Heart right ventricle (tissue), 16 donors: ENCODE measurements at regions of chr3 and their contacts with region 1.

Region 1: GRCh38 chr3:71583566-71584449 is at the start of gene FOXP1:
- DNase-seq: peak; percentile 75 to 84
- ATAC-seq: peak; percentile 65 to 84 (median 72)
- H3K4me3 ChIP-seq: peak within 1 kb of the TSS; percentile 63 to 93 (median 81)
- H3K27ac ChIP-seq: peak within 1 kb of the TSS; percentile 95 to 99 (median 98)
- H3K4me1 ChIP-seq: peaks cover 0 to 48% (median 36%) of the 10 kb centered on the region in 9 donors
- H3K27me3 ChIP-seq: no peaks in the 10 kb centered on the region
- CTCF ChIP-seq: no peak
- total RNA-seq, gene FOXP1: 36.1 to 56.0 (median 46.1) TPM

Region 2: DNA sequence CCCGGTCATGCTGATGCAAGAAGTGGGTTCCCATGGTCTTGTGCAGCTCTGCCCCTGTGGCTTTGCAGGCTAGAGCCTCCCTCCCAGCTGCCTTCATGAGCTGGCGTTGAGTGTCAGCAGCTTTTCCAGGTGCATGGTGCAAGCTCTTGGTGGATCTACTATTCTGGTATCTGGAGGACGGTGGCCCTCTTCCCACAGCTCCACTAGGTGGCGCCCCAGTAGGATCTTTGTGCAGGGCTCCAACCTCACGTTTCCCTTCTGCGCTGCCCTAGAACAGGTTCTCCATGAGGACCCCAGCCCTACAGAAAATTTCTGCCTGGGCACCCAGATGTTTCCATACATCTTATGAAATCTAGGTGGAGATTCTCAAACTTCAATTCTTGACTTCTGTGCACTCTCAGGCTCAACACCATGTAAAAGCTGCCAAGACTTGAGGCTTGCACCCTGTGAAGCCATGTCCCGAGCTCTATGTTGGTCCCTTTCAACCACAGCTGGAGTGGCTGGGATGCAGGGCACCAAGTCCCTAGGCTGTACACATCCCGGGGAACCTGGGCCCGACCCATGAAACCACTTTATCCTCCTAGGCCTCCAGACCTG is 1033.0 kb before region 1 on chr3:
- intact Hi-C with region 1: loop called in 8 of 10 experiments (anchors 2 to 10 kb)
- DNase-seq: peak; percentile 65 to 72
- ATAC-seq: peak; percentile 76 to 92 (median 82)
- H3K4me3 ChIP-seq: no peak overlapping the region
- H3K27ac ChIP-seq: no peak overlapping the region
- H3K4me1 ChIP-seq: no peaks in the 10 kb centered on the region
- H3K27me3 ChIP-seq: no peaks in the 10 kb centered on the region
- CTCF ChIP-seq: peak; percentile 67 to 86 (median 81)

Region 3: DNA sequence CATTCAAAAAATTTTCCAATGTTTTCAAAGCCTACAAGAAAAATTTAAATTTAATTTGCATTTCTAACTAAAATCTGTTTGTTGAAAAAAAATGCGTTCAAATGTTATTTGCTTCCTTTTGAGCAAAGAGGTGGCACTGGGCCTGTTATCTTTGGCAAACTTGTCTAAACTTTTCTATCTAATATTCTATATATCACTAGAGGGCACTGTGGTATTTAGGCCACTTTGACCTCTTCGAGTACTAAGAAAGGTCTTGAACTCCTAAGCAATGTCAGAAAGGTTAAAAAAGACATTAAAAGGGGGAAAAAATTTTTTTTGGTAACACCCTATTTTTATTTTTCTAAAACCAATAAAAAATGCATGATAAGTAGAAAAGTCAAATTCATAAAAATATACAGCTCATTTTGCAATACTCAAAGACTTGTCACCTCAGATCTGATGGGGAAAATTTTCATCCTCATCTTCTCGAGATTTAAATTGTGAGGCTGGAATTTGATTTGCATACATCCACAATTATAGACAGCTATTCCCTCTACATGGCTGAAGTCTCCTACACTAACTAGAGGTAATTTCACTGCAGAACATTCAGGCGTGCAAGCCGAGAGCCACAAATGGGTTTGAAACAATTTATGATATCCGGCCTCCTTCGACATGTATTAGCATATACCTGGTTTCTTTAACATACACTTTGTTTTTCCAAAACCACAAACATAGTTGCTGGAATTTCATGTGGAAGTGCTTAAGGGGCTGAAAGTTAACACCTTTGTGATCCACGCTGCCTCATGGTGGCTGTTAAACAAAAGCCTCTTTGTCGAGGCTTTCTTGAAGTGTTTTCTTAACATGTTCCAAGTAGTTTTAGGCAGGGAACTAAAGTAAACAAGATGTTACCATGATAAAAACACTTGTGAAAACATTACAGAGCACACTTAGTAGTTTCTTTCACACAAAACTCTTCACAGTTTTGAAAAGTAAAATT is 576.7 kb before region 1 on chr3:
- intact Hi-C with region 1: loop called in 7 of 10 experiments (anchors 5 to 10 kb)
- DNase-seq: no peak
- ATAC-seq: peak in 7 of 8 donors; percentile 48 to 82 (median 66)
- H3K4me3 ChIP-seq: no peak overlapping the region
- H3K27ac ChIP-seq: peak overlapping the region in 8 of 10 donors; percentile 16 to 59 (median 40)
- H3K4me1 ChIP-seq: peaks cover 3 to 86% (median 55%) of the 10 kb centered on the region in 9 donors
- H3K27me3 ChIP-seq: no peaks in the 10 kb centered on the region
- CTCF ChIP-seq: peak; percentile 10 to 76 (median 58)

Region 4: GRCh38 chr3:71069797-71070196 is 514.0 kb before region 1 on chr3:
- intact Hi-C with region 1: loop called in 7 of 10 experiments (anchors 5 to 10 kb)
- DNase-seq: peak; percentile 56 to 75
- ATAC-seq: peak; percentile 45 to 70 (median 58)
- H3K4me3 ChIP-seq: no peak overlapping the region
- H3K27ac ChIP-seq: peak overlapping the region in 4 of 10 donors; percentile 15 to 50 (median 20)
- H3K4me1 ChIP-seq: peaks cover 5 to 64% (median 51%) of the 10 kb centered on the region in 9 donors
- H3K27me3 ChIP-seq: no peaks in the 10 kb centered on the region
- CTCF ChIP-seq: peak; percentile 29 to 74 (median 62)

Region 5: GRCh38 chr3:71247221-71247976 is 336.4 kb before region 1 on chr3:
- intact Hi-C with region 1: loop called in 4 of 10 experiments (anchors 2 to 10 kb)
- DNase-seq: peak in 1 of 2 donors; percentile 24
- ATAC-seq: peak in 6 of 8 donors; percentile 24 to 66 (median 46)
- H3K4me3 ChIP-seq: no peak overlapping the region
- H3K27ac ChIP-seq: peak overlapping the region in 4 of 10 donors; percentile 40 to 82 (median 67)
- H3K4me1 ChIP-seq: peaks cover 8 to 76% (median 48%) of the 10 kb centered on the region in 9 donors
- H3K27me3 ChIP-seq: no peaks in the 10 kb centered on the region
- CTCF ChIP-seq: peak in 2 of 9 donors; percentile 14 to 15

Region 6: DNA sequence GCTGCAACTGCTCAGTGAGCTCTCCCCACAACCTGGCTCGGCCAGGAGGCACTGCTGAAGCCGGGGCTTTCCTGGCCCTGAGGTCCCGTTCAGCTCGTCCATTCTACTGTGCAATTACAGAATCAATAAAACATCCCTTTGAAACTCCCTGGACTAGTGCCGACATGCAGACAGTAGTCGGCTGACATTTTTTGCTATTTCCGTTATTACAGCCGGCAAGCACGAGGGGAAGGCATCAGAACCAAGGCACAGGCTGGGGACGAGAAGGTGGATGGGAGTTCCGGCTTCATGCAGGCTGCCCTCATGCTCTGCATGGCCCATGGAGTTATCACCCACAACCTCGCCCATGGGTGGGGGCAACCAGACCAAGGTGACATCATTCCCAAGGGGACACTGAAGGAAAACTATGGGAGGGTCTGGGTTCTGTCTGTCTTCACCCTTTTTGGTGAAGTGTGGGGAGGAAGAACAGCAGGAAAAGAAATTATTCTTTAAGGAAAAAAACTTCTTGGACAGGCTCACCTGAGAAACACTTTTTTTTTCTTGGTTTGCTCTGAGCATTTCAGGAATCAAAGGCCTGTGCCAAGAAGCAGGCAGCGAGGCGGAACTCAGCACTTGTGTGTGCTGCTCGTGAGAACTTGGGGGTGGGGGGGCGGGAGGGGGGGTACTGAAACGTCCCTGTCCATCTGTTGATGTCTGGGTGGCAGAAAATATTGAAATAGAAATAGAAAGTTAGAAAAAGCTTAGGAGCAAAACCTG is 154.8 kb before region 1 on chr3:
- intact Hi-C with region 1: loop called in 3 of 10 experiments (anchors 10 kb)
- DNase-seq: peak; percentile 21 to 58
- ATAC-seq: peak; percentile 31 to 71 (median 63)
- H3K4me3 ChIP-seq: peak overlapping the region in 6 of 10 donors; percentile 20 to 33 (median 24)
- H3K27ac ChIP-seq: peak overlapping the region in 8 of 10 donors; percentile 11 to 66 (median 52)
- H3K4me1 ChIP-seq: peaks cover 10 to 63% (median 41%) of the 10 kb centered on the region in 9 donors
- H3K27me3 ChIP-seq: no peaks in the 10 kb centered on the region
- CTCF ChIP-seq: no peak

Region 7: GRCh38 chr3:71641674-71642073 is 57.9 kb after region 1 on chr3:
- intact Hi-C with region 1: no loop called
- DNase-seq: no peak
- ATAC-seq: no peak
- H3K4me3 ChIP-seq: no peak overlapping the region
- H3K27ac ChIP-seq: no peak overlapping the region
- H3K4me1 ChIP-seq: no peaks in the 10 kb centered on the region
- H3K27me3 ChIP-seq: no peaks in the 10 kb centered on the region
- CTCF ChIP-seq: no peak